Activated T-helper 2 cell treated with anti-CD3 and anti-CD28 coated beads, Interferon-gamma antibody, Interleukin-2, Interleukin-4, amounts not matched to agents 10 μg/mL and 5 μg/mL and 100 μg/mL, durations not matched to agents 14 hours and 24 hours and 36 hours (primary cell): ENCODE measurements at regions of chr10 and their contacts with region 1.

Region 1: GRCh38 chr10:97498076-97498840 is at the start of gene MMS19:
- DNase-seq: peak; percentile 99
- H3K4me3 Mint-ChIP-seq: peak within 1 kb of the TSS; percentile 91
- H3K27ac Mint-ChIP-seq: peak within 1 kb of the TSS; percentile 99
- H3K4me1 Mint-ChIP-seq: peaks cover 34% of the 10 kb centered on the region
- H3K27me3 Mint-ChIP-seq: peaks cover 33% of the 10 kb centered on the region
- total RNA-seq, gene MMS19: 106 and 108 TPM in 2 replicates

Region 2: DNA sequence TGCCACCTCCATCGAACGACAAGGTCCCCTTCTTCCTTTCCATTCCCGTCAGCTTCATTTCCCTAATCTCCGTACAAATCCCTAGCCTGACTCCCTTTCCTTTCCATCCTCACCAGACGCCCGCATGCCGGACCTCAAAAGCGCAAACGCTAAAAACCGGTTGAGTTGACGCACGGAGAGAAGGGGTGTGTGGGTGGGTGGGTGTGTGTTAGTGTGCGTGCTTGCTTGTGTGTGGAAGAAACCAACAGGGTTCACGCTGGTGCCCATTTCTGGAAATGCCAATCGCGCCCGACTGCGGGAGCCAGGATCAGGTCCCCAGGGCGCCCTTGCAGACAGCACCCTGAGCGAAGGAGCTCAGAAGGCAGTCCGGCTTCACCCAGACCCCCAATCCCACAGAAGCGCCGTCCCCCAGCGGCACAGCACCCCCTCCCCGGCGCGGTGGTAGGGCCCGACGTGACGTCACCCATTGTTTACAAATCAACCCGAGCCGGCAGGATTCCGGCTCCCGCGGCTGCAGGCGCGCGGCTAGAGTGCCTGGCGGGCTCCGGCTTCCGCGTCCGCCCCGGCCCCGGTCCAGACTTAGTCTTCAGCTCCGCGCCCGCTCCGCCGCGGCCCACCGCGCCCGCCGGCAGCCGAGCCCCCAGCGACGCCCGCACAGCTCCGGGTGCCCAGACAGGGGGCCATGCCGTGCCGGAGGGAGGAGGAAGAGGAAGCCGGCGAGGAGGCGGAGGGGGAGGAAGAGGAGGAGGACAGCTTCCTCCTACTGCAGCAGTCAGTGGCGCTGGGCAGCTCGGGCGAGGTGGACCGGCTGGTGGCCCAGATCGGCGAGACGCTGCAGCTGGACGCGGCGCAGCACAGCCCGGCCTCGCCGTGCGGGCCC is 179.2 kb before region 1 on chr10 and contains the start of gene FRAT1:
- intact Hi-C with region 1: loop called (anchors 5 kb)
- DNase-seq: peak; percentile 89
- H3K4me3 Mint-ChIP-seq: peak within 1 kb of the TSS; percentile 91
- H3K27ac Mint-ChIP-seq: peak within 1 kb of the TSS; percentile 99
- H3K4me1 Mint-ChIP-seq: peaks cover 19% of the 10 kb centered on the region
- H3K27me3 Mint-ChIP-seq: peaks cover 10% of the 10 kb centered on the region
- total RNA-seq, gene FRAT1: 2.9 and 3.4 TPM in 2 replicates

Region 3: DNA sequence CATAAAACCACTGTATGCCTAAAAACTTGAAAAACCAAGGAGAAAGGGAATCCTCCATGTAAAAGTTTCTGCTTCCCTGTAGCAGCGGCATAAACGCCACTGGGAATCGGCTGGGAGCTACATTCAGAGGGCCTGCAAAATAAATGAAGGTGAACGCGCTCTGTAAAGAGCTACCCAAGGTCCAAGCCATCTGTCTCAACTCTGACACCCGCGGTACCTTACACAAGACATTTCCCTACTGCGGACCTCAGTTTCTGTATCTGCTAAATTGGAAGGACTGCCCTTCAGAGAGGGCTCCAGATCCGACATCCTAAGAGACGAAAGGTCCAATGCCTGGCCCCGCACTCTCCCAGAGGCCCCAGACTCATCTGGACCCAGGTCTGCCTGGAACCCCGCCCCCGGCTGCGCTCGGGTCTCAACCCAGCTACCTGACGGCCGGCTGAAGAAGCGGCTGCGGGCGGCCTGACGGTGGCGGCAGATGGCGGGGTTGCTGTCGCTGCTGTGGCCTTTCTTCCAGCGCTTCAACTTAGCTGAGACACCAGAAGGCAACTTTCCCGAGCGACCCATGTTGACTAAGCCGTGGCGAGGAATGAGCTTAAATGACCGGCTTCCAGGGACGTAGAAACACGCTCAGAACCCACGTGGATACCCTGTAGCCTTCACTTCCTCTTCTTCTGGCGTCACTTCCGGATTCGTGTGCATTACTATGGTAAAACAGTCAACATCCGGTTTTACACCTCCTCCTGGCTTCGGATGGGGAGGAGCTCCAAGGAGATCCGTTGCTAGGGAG is 97.4 kb before region 1 on chr10 and contains the start of gene RRP12:
- intact Hi-C with region 1: loop called (anchors 2 kb)
- DNase-seq: peak; percentile 87
- H3K4me3 Mint-ChIP-seq: peak within 1 kb of the TSS; percentile 97
- H3K27ac Mint-ChIP-seq: peak within 1 kb of the TSS; percentile 89
- H3K4me1 Mint-ChIP-seq: peaks cover 11% of the 10 kb centered on the region
- H3K27me3 Mint-ChIP-seq: no peaks in the 10 kb centered on the region
- total RNA-seq, gene RRP12: 69.8 and 70.1 TPM in 2 replicates

Region 4: DNA sequence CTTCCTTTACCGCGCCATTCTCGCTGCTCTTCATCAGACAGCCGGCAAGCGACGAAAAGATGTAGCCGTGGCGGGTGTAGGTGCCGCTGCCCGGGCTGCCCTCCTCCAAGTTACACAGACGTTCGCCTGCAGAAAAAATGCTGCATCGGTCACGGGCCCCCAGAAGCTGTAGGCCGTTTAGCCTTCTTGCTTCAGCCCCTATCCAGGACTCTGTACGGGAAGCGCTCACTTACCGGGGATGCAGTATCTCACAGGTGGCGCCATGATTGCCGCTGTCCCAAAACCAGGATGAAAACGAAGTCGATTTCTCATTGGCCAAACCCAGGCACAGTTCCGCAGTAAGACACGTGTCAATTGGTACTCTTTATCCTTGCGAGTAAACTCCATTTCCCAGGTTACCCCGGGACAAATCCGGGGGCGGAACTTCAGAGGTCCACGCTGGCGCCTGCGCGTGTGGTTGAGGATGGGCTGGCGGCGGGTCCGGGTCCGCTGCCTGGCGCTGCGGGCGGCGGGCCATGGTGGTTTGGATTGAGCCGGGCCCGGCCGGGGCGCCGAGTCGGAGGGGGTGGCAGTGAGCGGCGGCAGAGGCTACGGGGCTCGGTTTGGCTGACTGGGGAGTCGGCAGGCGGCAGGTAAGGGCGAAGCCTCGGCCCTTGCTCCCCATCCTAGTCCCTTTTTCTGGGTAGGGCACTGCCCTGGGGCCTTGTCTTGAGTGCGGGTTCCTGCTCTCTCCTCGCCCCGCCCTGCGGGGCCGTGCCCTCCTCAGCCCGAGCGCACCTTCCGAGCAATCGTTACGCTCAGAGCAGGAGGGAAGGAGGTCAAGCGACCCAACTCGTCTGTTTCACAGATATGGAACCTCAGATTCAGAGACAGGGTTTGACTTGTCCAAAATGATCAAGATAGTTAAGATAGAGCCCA is 52.3 kb before region 1 on chr10 and contains the starts of genes EXOSC1 and ZDHHC16:
- intact Hi-C with region 1: loop called (anchors 1 kb)
- DNase-seq: peak; percentile 92
- H3K4me3 Mint-ChIP-seq: peak within 1 kb of the TSS; percentile 95
- H3K27ac Mint-ChIP-seq: peak within 1 kb of the TSS; percentile 69
- H3K4me1 Mint-ChIP-seq: peaks cover 34% of the 10 kb centered on the region
- H3K27me3 Mint-ChIP-seq: no peaks in the 10 kb centered on the region
- total RNA-seq, gene EXOSC1: 49.9 and 53.4 TPM in 2 replicates
- total RNA-seq, gene ZDHHC16: 41.4 and 52.9 TPM in 2 replicates

Region 5: DNA sequence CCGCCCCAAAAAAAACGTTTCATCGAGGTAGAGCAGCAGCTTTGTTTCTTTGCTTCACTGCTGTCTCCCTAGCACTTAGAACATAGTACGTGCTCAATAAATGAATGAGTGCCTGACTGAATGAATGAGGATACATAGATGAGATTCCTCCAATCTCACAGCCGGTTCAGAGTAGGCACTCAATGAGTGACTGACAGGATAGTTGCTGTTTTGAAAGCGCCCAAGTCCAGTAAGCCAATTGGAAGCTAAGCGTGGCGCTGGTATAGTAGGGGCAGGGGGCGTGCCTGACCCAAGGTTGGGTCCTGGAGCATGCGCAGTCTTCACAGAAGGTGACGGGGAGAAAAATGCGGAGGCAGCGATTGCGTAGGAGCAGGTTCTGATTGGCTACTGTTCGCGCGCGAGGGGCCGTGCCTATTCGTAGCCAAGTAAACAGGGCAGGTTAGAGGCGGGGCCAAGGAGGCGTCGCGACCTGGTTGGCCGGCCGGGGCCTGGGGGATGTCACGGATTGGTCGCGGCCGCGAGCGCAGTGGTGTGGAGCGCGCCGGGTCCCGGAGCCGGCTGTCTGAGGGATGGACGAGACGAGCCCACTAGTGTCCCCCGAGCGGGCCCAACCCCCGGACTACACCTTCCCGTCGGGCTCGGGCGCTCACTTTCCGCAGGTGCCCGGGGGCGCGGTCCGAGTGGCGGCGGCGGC is 142.1 kb after region 1 on chr10 and contains the start of gene PI4K2A:
- intact Hi-C with region 1: loop called (anchors 1 kb)
- DNase-seq: peak; percentile 99
- H3K4me3 Mint-ChIP-seq: peak within 1 kb of the TSS; percentile 92
- H3K27ac Mint-ChIP-seq: peak within 1 kb of the TSS; percentile 84
- H3K4me1 Mint-ChIP-seq: peaks cover 19% of the 10 kb centered on the region
- H3K27me3 Mint-ChIP-seq: no peaks in the 10 kb centered on the region
- total RNA-seq, gene PI4K2A: 15.8 and 17.4 TPM in 2 replicates

Region 6: GRCh38 chr10:97780841-97781617 is 282.8 kb after region 1 on chr10:
- intact Hi-C with region 1: no loop called
- DNase-seq: no peak
- H3K4me3 Mint-ChIP-seq: no peak overlapping the region
- H3K27ac Mint-ChIP-seq: no peak overlapping the region
- H3K4me1 Mint-ChIP-seq: peaks cover 6% of the 10 kb centered on the region
- H3K27me3 Mint-ChIP-seq: peaks cover 2% of the 10 kb centered on the region